ENCODE measurements at regions of chr3 and their contacts with region 1.

Region 1: DNA sequence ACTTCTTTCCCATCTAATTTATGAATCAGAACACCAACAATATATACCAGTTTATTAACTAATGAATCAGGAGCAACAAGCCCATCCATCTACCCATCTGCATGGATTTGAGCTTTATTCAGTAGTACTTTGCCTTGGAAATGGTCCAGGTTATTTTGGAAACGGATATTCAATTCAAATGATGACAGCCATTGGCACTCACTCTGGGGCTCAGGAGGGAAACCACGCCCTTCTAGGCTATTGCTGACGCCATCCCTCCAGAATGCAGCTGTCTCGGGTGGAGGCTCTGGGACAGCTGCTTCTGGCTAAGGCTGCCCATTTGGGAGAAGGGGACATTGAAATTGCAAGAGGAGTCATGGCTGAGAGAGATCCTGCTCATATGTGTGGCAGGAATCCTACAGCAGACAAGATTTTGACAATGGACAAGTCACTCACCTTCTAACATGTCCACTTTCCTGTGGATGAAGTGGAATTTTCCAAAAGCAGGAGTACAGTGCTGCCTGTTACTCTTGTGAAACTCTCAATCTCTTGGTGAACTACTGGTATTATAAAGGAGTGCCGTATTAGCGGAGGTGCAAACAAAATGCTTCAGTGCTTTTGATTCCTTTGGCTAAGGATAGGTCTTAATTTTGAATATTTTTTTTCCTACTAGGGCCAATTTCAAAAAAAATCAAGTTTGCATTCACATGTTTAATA is 29.3 kb upstream of the TRAK1 start:
- DNase-seq: peak; percentile 90
- H3K4me3 ChIP-seq: no peak overlapping the region
- H3K27ac ChIP-seq: peak overlapping the region; percentile 80
- H3K4me1 ChIP-seq: peaks cover 36% of the 10 kb centered on the region
- H3K27me3 ChIP-seq: no peaks in the 10 kb centered on the region
- CTCF ChIP-seq: no peak
- POLR2A ChIP-seq: no peak

Region 2: GRCh38 chr3:42019144-42019952 is 42.5 kb before region 1 on chr3:
- CTCF ChIA-PET with region 1: interaction called, 3 read pairs
- POLR2A ChIA-PET with region 1: no interaction called
- dilution Hi-C with region 1: no loop called
- intact Hi-C with region 1: loop called (anchors 1 kb)
- DNase-seq: peak; percentile 39
- H3K4me3 ChIP-seq: no peak overlapping the region
- H3K27ac ChIP-seq: peak overlapping the region; percentile 87
- H3K4me1 ChIP-seq: peaks cover 54% of the 10 kb centered on the region
- H3K27me3 ChIP-seq: no peaks in the 10 kb centered on the region
- CTCF ChIP-seq: no peak
- POLR2A ChIP-seq: no peak

Region 3: DNA sequence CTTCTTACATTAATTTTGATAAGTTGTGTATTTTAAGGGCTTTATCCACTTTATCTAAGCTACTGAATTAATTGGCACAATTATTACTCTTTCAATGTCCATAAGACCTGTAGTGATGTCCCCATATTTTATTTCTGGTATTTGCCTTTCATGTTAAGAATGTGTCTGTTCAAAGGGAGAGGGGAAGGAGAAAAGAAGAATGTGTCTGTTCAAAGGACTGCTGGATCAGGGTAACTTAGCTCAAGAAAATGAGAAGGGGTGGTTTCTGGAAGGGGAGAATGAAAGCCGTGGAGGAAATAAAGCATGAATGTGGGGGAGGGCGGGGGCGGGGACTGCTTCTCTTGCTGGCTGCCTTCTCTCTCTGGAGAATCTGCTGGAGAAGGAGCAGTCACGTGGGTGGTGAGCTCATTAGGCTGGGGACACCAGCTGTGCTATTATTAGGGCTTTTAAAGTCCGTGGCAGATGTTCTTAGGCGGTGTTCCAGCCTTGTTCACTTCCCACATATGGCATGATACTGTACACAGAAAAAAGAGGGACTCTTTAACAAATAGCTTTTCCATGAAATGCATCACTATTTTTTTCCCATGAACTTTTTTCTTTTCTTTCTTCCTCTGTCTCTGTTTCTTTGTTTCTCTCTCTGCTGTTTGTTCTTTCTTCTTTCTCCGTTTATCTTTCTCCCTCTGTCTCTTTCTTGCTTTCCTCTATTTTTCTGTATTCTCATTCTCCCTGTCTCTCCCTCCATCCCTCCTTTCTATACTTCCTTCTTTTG is 36.3 kb before region 1 on chr3:
- CTCF ChIA-PET with region 1: interaction called, 5 read pairs
- POLR2A ChIA-PET with region 1: interaction called, 4 read pairs
- dilution Hi-C with region 1: no loop called
- intact Hi-C with region 1: loop called (anchors 2 kb)
- DNase-seq: peak; percentile 98
- H3K4me3 ChIP-seq: peak overlapping the region in 1 of 3 experiments; percentile 46
- H3K27ac ChIP-seq: peak overlapping the region; percentile 93
- H3K4me1 ChIP-seq: peaks cover 40% of the 10 kb centered on the region
- H3K27me3 ChIP-seq: no peaks in the 10 kb centered on the region
- CTCF ChIP-seq: no peak
- POLR2A ChIP-seq: peak; percentile 18

Region 4: DNA sequence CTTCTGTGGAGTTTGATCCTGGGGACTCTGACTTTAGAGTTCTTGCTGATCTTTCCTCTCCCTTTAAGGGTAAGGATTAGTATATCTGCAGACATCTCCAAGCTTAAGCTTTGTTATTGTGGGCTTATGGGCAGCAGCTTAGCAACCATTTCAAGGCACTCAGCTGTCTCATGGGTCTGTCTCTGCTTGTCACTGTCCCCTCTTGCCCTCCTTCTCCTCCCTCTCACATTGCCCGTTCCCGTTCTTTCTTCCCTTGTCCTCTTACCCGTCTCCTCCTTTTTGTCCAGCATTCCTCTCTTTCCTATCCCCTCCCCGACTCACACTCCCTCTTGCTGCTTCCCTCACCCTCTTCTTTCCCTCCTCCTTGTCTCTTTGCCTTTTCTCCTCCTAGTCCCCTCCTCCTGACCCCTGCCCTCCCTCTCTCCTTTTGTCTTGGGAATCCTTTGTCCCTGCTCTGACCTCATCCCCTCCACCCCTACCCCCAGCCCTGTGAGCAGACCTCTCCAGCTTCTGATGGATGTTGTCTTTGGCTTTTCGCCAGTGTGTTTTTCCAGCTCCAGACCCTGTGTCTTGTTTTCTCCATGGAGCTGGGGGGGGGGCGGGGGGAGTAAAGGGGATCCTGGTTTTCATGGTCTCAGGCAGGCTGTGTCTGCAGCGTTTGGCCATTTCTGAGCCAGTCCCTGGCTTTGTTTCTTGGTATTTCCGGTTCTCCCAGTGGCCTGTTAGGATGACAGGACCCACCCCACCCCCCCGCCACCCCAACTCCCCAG is 18.6 kb before region 1 on chr3:
- CTCF ChIA-PET with region 1: interaction called, 5 read pairs
- POLR2A ChIA-PET with region 1: interaction called, 4 read pairs
- dilution Hi-C with region 1: no loop called
- intact Hi-C with region 1: loop called (anchors 1 kb)
- DNase-seq: peak; percentile 98
- H3K4me3 ChIP-seq: no peak overlapping the region
- H3K27ac ChIP-seq: peak overlapping the region; percentile 91
- H3K4me1 ChIP-seq: peaks cover 35% of the 10 kb centered on the region
- H3K27me3 ChIP-seq: no peaks in the 10 kb centered on the region
- CTCF ChIP-seq: no peak
- POLR2A ChIP-seq: peak; percentile 32

Measured in endothelial cell of umbilical vein (primary cell).